Activated CD8-positive, alpha-beta T cell treated with anti-CD3 and anti-CD28 coated beads for 36 hours (primary cell): ENCODE measurements at regions of chr22 and their contacts with region 1.

Region 1: GRCh38 chr22:40525249-40525884 is 111.2 kb downstream of the MRTFA start:
- DNase-seq: peak; percentile 85
- ATAC-seq: peak; percentile 69
- H3K4me3 Mint-ChIP-seq: no peak overlapping the region
- H3K27ac Mint-ChIP-seq: no peak overlapping the region
- H3K4me1 Mint-ChIP-seq: peaks cover 43% of the 10 kb centered on the region
- H3K27me3 Mint-ChIP-seq: no peaks in the 10 kb centered on the region
- CTCF ChIP-seq: peak; percentile 91

Region 2: GRCh38 chr22:40651563-40652501 is 126.5 kb after region 1 on chr22:
- CTCF ChIA-PET with region 1: interaction called, 87 read pairs
- POLR2A ChIA-PET with region 1: interaction called, 3 read pairs
- intact Hi-C with region 1: loop called (anchors 5 kb)
- DNase-seq: peak; percentile 95
- ATAC-seq: peak; percentile 98
- H3K4me3 Mint-ChIP-seq: peak overlapping the region; percentile 56
- H3K27ac Mint-ChIP-seq: peak overlapping the region; percentile 88
- H3K4me1 Mint-ChIP-seq: peaks cover 13% of the 10 kb centered on the region
- H3K27me3 Mint-ChIP-seq: no peaks in the 10 kb centered on the region
- CTCF ChIP-seq: no peak